ENCODE measurements at regions of chrX and their contacts with region 1.

Region 1: GRCh38 chrX:120468825-120469525 is at the start of gene LAMP2:
- DNase-seq: peak; percentile 86 to 91
- H3K4me3 ChIP-seq: peak within 1 kb of the TSS; percentile 81
- H3K27ac ChIP-seq: peak within 1 kb of the TSS; percentile 85
- H3K4me1 ChIP-seq: peaks cover 14% of the 10 kb centered on the region
- H3K27me3 ChIP-seq: no peaks in the 10 kb centered on the region
- CTCF ChIP-seq: no peak
- total RNA-seq, gene LAMP2: 92.4 and 123 TPM in 2 replicates

Region 2: GRCh38 chrX:120090208-120090607 is 378.8 kb before region 1 on chrX:
- CTCF ChIA-PET with region 1: no interaction called
- POLR2A ChIA-PET with region 1: no interaction called
- intact Hi-C with region 1: loop called (anchors 10 kb)
- DNase-seq: no peak
- H3K4me3 ChIP-seq: no peak overlapping the region
- H3K27ac ChIP-seq: no peak overlapping the region
- H3K4me1 ChIP-seq: no peaks in the 10 kb centered on the region
- H3K27me3 ChIP-seq: no peaks in the 10 kb centered on the region
- CTCF ChIP-seq: no peak

Region 3: GRCh38 chrX:120250522-120251271 is 218.3 kb before region 1 on chrX and contains the start of gene ZBTB33:
- CTCF ChIA-PET with region 1: no interaction called
- POLR2A ChIA-PET with region 1: interaction called, 4 read pairs
- intact Hi-C with region 1: loop called (anchors 5 kb)
- DNase-seq: peak; percentile 92 to 96
- H3K4me3 ChIP-seq: peak within 1 kb of the TSS; percentile 75
- H3K27ac ChIP-seq: peak within 1 kb of the TSS; percentile 83
- H3K4me1 ChIP-seq: peaks cover 14% of the 10 kb centered on the region
- H3K27me3 ChIP-seq: no peaks in the 10 kb centered on the region
- CTCF ChIP-seq: peak; percentile 82
- total RNA-seq, gene ZBTB33: 19.1 and 29.0 TPM in 2 replicates

Region 4: GRCh38 chrX:121000587-121000986 is 531.6 kb after region 1 on chrX:
- CTCF ChIA-PET with region 1: no interaction called
- POLR2A ChIA-PET with region 1: interaction called, 13 read pairs
- intact Hi-C with region 1: no loop called
- DNase-seq: peak in 1 of 2 experiments; percentile 45
- H3K4me3 ChIP-seq: no peak overlapping the region
- H3K27ac ChIP-seq: no peak overlapping the region
- H3K4me1 ChIP-seq: no peaks in the 10 kb centered on the region
- H3K27me3 ChIP-seq: no peaks in the 10 kb centered on the region
- CTCF ChIP-seq: peak; percentile 59